GM12878 (cell line): ENCODE measurements at regions of chr3 and their contacts with region 1.

Region 1: DNA sequence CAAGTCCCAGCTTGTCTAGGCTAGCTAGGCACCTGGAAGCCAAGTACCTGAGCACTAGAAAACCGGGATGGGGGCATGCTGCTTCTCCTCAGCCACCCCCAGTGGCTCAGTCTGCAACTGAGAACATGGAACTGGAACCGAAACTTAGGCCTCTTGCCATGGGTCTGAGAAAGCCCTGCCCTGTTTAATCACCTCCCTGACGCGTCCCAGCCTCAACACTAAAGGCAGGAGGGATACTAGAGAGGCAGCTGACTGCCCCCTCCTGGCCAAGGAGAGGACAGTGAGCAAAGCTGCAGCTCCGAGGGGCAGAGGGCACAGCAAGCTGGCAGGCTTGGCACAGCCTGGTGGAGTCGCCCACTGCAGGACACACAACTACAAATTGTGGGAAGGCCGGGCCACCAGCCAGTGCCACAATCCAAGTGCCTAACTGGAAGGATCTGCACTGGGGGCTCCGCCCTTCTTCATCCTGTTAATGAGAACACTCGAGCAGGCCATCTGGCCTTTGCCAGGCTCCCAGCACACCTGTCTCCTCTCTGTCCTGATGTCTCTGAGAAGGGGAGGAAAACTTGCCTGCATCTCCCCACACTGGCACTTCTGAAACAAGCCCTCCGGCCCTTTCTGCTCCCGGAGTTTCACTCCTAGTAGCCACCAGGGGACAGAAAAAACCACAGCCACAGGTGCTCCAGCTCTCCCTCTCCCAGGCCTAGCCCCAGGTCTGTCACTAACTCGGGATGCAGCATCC is 53.7 kb downstream of the BDH1 start:
- DNase-seq: peak; percentile 57
- ATAC-seq: peak; percentile 97
- H3K4me3 ChIP-seq: no peak overlapping the region
- H3K27ac ChIP-seq: peak overlapping the region; percentile 63
- H3K4me1 ChIP-seq: peaks cover 19% of the 10 kb centered on the region
- H3K27me3 ChIP-seq: no peaks in the 10 kb centered on the region
- CTCF ChIP-seq: peak; percentile 67 to 81 (median 78)
- EP300 ChIP-seq: no peak
- POLR2A ChIP-seq: no peak
- RAD21 ChIP-seq: peak; percentile 93

Region 2: GRCh38 chr3:196988241-196989029 is 513.6 kb before region 1 on chr3:
- CTCF ChIA-PET with region 1: no interaction called
- POLR2A ChIA-PET with region 1: no interaction called
- RAD21 ChIA-PET with region 1: no interaction called
- SMC1A ChIA-PET with region 1: no interaction called
- in situ Hi-C with region 1: loop called (anchors 25 kb)
- intact Hi-C with region 1: no loop called
- DNase-seq: no peak
- ATAC-seq: peak; percentile 82
- H3K4me3 ChIP-seq: no peak overlapping the region
- H3K27ac ChIP-seq: no peak overlapping the region
- H3K4me1 ChIP-seq: no peaks in the 10 kb centered on the region
- H3K27me3 ChIP-seq: no peaks in the 10 kb centered on the region
- CTCF ChIP-seq: peak; percentile 14 to 30 (median 14); a peak in 1 of 6 replicates
- EP300 ChIP-seq: no peak
- POLR2A ChIP-seq: no peak
- RAD21 ChIP-seq: no peak

Region 3: DNA sequence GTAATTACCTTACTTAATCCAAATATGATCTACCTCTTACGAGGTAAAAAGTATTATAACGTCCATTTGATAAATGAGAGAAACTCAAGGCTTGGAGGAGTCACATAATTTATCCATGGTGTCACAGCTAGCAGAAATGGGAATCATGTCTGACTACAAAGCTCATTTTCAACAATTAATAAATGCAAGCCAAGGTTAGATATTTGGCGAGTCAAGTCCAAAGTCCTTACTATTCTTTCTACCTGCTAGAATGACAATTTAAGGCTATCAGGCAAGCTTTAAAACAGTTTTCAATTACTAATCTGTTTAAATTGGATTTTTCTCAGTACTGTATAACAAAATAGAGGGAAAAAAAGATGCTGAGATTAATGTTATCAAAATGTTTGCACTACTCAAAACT is 272.2 kb before region 1 on chr3:
- CTCF ChIA-PET with region 1: interaction called, 83 read pairs
- POLR2A ChIA-PET with region 1: interaction called, 5 read pairs
- RAD21 ChIA-PET with region 1: interaction called, 49 read pairs
- SMC1A ChIA-PET with region 1: interaction called, 39 read pairs
- in situ Hi-C with region 1: no loop called
- intact Hi-C with region 1: loop called (anchors 2 kb)
- DNase-seq: no peak
- ATAC-seq: no peak
- H3K4me3 ChIP-seq: no peak overlapping the region
- H3K27ac ChIP-seq: no peak overlapping the region
- H3K4me1 ChIP-seq: peaks cover 6% of the 10 kb centered on the region; the same call in 1 of the 2 replicates
- H3K27me3 ChIP-seq: no peaks in the 10 kb centered on the region
- CTCF ChIP-seq: no peak
- EP300 ChIP-seq: no peak
- POLR2A ChIP-seq: no peak
- RAD21 ChIP-seq: no peak

Region 4: DNA sequence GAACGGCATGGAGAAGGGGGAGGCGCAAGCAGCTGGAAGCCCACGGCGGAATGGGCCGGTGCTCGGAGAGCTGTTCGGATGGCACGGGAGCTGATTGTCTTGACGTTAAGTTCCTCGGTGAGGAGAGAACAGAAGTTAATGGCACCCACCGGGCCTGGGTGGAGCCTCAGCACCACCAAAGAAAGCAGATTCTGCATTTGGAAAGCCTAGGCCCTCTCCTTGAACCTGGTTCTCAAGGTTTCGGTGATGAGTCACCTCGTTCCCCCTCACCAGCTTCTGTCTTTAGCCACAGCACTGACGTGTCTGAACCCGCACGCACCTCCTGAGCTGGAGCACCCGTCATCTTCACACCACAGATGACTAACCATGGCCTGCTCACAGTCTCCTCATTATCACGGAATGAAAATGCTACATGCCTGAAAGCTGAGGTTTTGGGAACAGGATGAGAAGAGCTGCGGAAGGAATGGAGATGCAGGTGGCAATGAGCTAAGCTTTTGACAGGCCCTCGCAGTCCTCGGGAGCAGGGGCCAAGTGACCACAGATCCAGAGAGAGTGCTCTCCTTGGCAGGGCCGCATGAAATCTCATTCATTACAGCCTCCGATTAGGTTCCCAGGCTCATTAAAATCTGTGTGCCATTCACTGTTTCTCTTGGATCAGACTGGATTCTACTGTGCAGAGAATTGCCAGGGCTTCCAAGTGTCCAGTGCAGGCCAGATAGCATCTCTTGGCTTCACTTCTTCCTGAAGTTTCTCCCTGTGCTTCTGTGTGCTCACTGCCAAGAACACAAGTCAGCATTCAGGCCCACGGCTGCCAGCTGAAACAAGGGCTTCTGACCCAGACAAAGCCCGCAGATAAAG is 107.4 kb before region 1 on chr3:
- CTCF ChIA-PET with region 1: interaction called, 15 read pairs
- POLR2A ChIA-PET with region 1: no interaction called
- RAD21 ChIA-PET with region 1: interaction called, 5 read pairs
- SMC1A ChIA-PET with region 1: interaction called, 6 read pairs
- in situ Hi-C with region 1: no loop called
- intact Hi-C with region 1: loop called (anchors 1 kb)
- DNase-seq: peak; percentile 96
- ATAC-seq: peak; percentile 94
- H3K4me3 ChIP-seq: peak overlapping the region; percentile 44; the same call in 1 of the 2 replicates
- H3K27ac ChIP-seq: peak overlapping the region; percentile 89
- H3K4me1 ChIP-seq: peaks cover 30% of the 10 kb centered on the region
- H3K27me3 ChIP-seq: no peaks in the 10 kb centered on the region
- CTCF ChIP-seq: no peak
- EP300 ChIP-seq: peak; percentile 99 to 100
- POLR2A ChIP-seq: peak; percentile 69; the same call in 1 of the 2 replicates
- RAD21 ChIP-seq: peak; percentile 21; the same call in 1 of the 2 replicates

Region 5: DNA sequence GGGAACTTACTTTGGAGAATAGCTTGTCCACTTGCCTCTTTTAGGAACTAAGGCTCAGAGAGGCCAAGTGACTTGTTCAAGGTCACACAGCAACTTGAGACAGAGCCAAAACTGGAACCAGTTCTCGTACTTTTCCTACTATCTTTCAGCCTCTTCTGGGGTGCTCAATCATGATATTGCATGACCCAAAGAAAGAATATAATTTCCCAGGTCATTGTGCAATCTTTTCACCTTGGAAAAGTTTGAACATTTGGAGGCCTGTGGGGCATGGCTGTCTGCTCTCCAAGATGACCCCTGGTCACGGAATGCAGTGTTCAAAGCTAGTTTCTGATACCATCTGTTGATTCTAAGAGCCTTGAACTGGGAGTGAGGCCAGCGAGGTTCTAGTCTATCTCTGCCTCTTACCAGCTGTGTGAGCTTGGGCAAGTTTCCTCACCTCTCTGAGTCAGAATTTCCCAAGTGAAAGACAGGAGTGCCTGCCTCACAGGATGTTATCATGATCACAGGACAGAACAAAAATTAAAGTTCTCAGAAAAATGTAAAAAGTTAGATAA is 36.0 kb before region 1 on chr3:
- CTCF ChIA-PET with region 1: no interaction called
- POLR2A ChIA-PET with region 1: no interaction called
- RAD21 ChIA-PET with region 1: no interaction called
- SMC1A ChIA-PET with region 1: no interaction called
- in situ Hi-C with region 1: no loop called
- intact Hi-C with region 1: no loop called
- DNase-seq: no peak
- ATAC-seq: no peak
- H3K4me3 ChIP-seq: no peak overlapping the region
- H3K27ac ChIP-seq: no peak overlapping the region
- H3K4me1 ChIP-seq: no peaks in the 10 kb centered on the region
- H3K27me3 ChIP-seq: peaks cover 0 to 2% of the 10 kb centered on the region in 2 experiments; a peak in 2 of 4 replicates
- CTCF ChIP-seq: no peak
- EP300 ChIP-seq: no peak
- POLR2A ChIP-seq: no peak
- RAD21 ChIP-seq: no peak